ENCODE measurements at regions of chr4 and their contacts with region 1.

Region 1: DNA sequence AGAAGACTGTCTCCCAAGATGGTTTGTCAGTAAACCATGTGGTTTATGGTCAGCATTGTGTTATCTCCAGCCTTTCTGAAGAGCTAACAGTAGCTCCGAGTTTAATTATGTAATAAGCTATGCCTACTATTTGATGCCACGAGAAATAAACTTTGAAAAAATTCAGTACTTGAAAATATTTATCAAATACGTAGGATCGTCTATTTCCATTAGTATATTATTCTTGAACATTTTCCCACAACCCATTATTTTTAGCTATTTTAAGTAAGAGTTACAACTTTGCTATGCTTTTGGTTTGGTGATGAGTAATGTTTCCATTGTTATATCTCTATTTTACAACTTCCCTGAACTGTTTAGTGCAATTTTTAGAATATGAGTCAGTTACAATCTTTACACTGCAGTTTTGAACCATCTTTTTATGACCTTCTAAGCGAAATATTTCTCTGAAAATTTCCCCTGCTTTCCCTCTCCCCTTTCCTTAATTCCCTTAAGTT is 44.5 kb upstream of the TRIM2 start:
- DNase-seq: no peak
- ATAC-seq: peak; percentile 60
- H3K4me3 Mint-ChIP-seq: no peak overlapping the region
- H3K27ac Mint-ChIP-seq: peak overlapping the region; percentile 53
- H3K4me1 Mint-ChIP-seq: peaks cover 37% of the 10 kb centered on the region
- H3K27me3 Mint-ChIP-seq: peaks cover 18% of the 10 kb centered on the region
- CTCF ChIP-seq: no peak

Region 2: GRCh38 chr4:153170407-153170806 is 10.6 kb after region 1 on chr4:
- CTCF ChIA-PET with region 1: interaction called, 11 read pairs
- POLR2A ChIA-PET with region 1: interaction called, 4 read pairs
- intact Hi-C with region 1: no loop called
- DNase-seq: no peak
- ATAC-seq: no peak
- H3K4me3 Mint-ChIP-seq: no peak overlapping the region
- H3K27ac Mint-ChIP-seq: no peak overlapping the region
- H3K4me1 Mint-ChIP-seq: no peaks in the 10 kb centered on the region
- H3K27me3 Mint-ChIP-seq: peaks cover 13% of the 10 kb centered on the region
- CTCF ChIP-seq: no peak

Measured in activated CD8-positive, alpha-beta T cell treated with anti-CD3 and anti-CD28 coated beads for 36 hours (primary cell).